ENCODE measurements at regions of chr6 and their contacts with region 1.

Region 1: GRCh38 chr6:6676910-6677441 is 88.5 kb downstream of the LY86 start:
- DNase-seq: peak; percentile 98
- H3K4me3 ChIP-seq: no peak overlapping the region
- H3K27ac ChIP-seq: peak overlapping the region in 3 of 4 donors; percentile 19 to 42 (median 27)
- H3K4me1 ChIP-seq: peaks cover 6 to 13% (median 7%) of the 10 kb centered on the region in 4 donors
- H3K27me3 ChIP-seq: no peaks in the 10 kb centered on the region
- CTCF ChIP-seq: peak; percentile 95 to 99 (median 98)
- EP300 ChIP-seq: no peak
- POLR2A ChIP-seq: no peak

Region 2: GRCh38 chr6:6713000-6713401 is 36.0 kb after region 1 on chr6:
- intact Hi-C with region 1: no loop called
- DNase-seq: no peak
- H3K4me3 ChIP-seq: peak overlapping the region in 1 of 4 donors; percentile 10
- H3K27ac ChIP-seq: peak overlapping the region; percentile 3 to 55 (median 24)
- H3K4me1 ChIP-seq: peaks cover 20 to 26% (median 22%) of the 10 kb centered on the region in 4 donors
- H3K27me3 ChIP-seq: no peaks in the 10 kb centered on the region
- CTCF ChIP-seq: no peak
- EP300 ChIP-seq: no peak
- POLR2A ChIP-seq: no peak

Region 3: GRCh38 chr6:6736791-6737654 is 60.0 kb after region 1 on chr6:
- intact Hi-C with region 1: no loop called
- DNase-seq: no peak
- H3K4me3 ChIP-seq: peak overlapping the region; percentile 13 to 33 (median 20)
- H3K27ac ChIP-seq: no peak overlapping the region
- H3K4me1 ChIP-seq: peaks cover 0 to 15% (median 5%) of the 10 kb centered on the region in 4 donors
- H3K27me3 ChIP-seq: peaks cover 0 to 40% (median 0%) of the 10 kb centered on the region in 4 donors
- CTCF ChIP-seq: no peak
- EP300 ChIP-seq: no peak
- POLR2A ChIP-seq: no peak

Region 4: GRCh38 chr6:6856538-6857523 is 179.9 kb after region 1 on chr6:
- intact Hi-C with region 1: loop called (anchors 10 kb)
- DNase-seq: no peak
- H3K4me3 ChIP-seq: peak overlapping the region in 3 of 4 donors; percentile 14 to 31 (median 29)
- H3K27ac ChIP-seq: peak overlapping the region in 2 of 4 donors; percentile 30 to 54
- H3K4me1 ChIP-seq: peaks cover 15 to 16% (median 15%) of the 10 kb centered on the region in 4 donors
- H3K27me3 ChIP-seq: peaks cover 0 to 23% (median 0%) of the 10 kb centered on the region in 4 donors
- CTCF ChIP-seq: no peak
- EP300 ChIP-seq: no peak
- POLR2A ChIP-seq: no peak